GM10248 (cell line): ENCODE measurements at regions of chr21 and their contacts with region 1.

Region 1: DNA sequence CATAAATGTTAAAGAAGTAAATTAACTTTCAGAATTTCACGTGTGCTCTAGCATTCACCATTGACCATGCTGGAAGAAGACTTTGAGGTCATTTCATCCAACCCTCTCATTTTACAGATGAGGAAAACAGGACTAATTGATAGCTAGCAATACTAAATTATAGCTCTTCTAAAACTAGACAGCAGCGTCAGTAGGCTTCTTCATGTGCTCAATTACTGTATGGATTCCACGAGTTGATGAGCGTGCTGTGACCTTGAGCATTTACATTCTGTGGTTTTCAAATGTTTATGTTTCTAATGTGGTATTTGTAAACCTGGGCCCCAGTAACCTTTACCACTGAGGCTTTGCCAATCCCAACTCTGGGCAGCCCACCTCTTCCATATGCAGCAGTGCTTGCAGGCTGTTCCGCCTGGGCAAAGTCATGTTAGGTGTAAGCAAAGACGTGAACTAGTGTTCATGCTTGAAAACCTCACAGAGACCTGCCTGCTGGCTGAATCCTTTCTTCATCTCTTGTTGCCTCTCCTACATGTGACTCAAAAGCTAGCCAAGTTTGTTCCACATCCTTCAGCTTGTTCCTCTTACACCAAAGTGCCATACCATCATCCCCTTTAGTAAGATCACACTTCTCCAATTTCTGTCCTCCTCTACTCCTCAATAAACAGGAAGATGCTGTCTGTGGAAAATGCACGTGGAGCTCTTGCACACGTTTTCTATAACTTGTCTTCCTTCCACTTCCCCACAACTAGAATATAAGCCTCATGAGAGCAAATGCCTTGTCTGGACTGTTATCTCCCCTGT is 17.2 kb downstream of the KCNJ15 start:
- DNase-seq: no peak
- CTCF ChIP-seq: no peak

Region 2: DNA sequence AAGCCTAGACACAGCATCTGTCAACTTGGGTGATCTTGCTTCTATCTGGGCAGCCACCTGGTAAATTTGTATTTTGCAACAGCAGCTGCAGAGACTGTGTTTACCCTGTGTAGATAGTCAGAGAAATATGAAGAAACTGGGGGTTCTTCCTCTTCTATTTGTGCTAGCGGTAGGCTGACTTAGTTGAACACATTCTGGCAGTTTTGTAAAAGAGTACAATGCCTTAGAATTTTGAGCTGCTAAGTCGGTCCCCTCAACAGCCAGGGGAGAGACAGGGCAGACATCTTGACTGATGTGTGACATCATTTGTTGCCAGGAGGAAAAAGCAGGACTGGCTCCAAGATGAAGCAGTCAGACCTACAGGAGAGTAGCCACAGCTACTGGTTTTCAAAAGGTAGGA is 411.4 kb before region 1 on chr21:
- CTCF ChIA-PET with region 1: no interaction called
- POLR2A ChIA-PET with region 1: no interaction called
- DNase-seq: peak; percentile 33
- CTCF ChIP-seq: no peak

Region 3: GRCh38 chr21:38254974-38255373 is 19.0 kb before region 1 on chr21:
- CTCF ChIA-PET with region 1: interaction called, 16 read pairs
- POLR2A ChIA-PET with region 1: no interaction called
- DNase-seq: no peak
- CTCF ChIP-seq: no peak